ENCODE measurements at regions of chrX and their contacts with region 1.

Region 1: GRCh38 chrX:96551322-96551872 is 133.2 kb upstream of the DIAPH2 start:
- DNase-seq: no peak
- ATAC-seq: no peak
- H3K4me3 ChIP-seq: no peak overlapping the region
- H3K27ac ChIP-seq: no peak overlapping the region
- H3K4me1 ChIP-seq: no peaks in the 10 kb centered on the region
- H3K27me3 ChIP-seq: no peaks in the 10 kb centered on the region
- CTCF ChIP-seq: no peak

Region 2: GRCh38 chrX:96563663-96564062 is 12.3 kb after region 1 on chrX:
- CTCF ChIA-PET with region 1: no interaction called
- POLR2A ChIA-PET with region 1: interaction called, 10 read pairs
- in situ Hi-C with region 1: no loop called
- intact Hi-C with region 1: no loop called
- DNase-seq: no peak
- ATAC-seq: no peak
- H3K4me3 ChIP-seq: no peak overlapping the region
- H3K27ac ChIP-seq: no peak overlapping the region
- H3K4me1 ChIP-seq: no peaks in the 10 kb centered on the region
- H3K27me3 ChIP-seq: no peaks in the 10 kb centered on the region
- CTCF ChIP-seq: no peak

Region 3: GRCh38 chrX:96611619-96612362 is 60.4 kb after region 1 on chrX:
- CTCF ChIA-PET with region 1: no interaction called
- POLR2A ChIA-PET with region 1: interaction called, 11 read pairs
- in situ Hi-C with region 1: no loop called
- intact Hi-C with region 1: no loop called
- DNase-seq: no peak
- ATAC-seq: no peak
- H3K4me3 ChIP-seq: no peak overlapping the region
- H3K27ac ChIP-seq: no peak overlapping the region
- H3K4me1 ChIP-seq: no peaks in the 10 kb centered on the region
- H3K27me3 ChIP-seq: no peaks in the 10 kb centered on the region; the same call in 1 of the 2 replicates
- CTCF ChIP-seq: no peak

Region 4: DNA sequence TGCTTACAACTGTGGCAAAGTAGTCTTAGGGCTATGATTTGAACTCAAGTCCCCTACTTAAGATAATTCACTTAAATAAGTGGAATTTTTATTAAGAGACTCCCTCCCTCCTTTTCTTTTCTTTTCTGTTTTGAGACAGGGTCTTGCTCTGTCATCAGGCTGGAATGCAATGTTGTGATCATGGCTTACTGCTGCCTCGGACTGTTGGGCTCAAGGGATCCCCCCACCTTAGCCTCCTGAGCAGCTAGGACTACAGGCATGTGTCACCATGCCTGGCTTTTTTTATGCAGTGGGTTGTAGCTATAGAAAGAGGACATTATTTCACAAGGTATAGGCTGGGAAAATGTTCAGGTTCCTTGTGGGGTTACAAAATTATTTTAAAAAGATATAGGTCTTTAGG is 152.4 kb after region 1 on chrX:
- CTCF ChIA-PET with region 1: no interaction called
- POLR2A ChIA-PET with region 1: no interaction called
- in situ Hi-C with region 1: no loop called
- intact Hi-C with region 1: no loop called
- DNase-seq: no peak
- ATAC-seq: no peak
- H3K4me3 ChIP-seq: no peak overlapping the region
- H3K27ac ChIP-seq: no peak overlapping the region
- H3K4me1 ChIP-seq: no peaks in the 10 kb centered on the region
- H3K27me3 ChIP-seq: no peaks in the 10 kb centered on the region
- CTCF ChIP-seq: no peak

Region 5: DNA sequence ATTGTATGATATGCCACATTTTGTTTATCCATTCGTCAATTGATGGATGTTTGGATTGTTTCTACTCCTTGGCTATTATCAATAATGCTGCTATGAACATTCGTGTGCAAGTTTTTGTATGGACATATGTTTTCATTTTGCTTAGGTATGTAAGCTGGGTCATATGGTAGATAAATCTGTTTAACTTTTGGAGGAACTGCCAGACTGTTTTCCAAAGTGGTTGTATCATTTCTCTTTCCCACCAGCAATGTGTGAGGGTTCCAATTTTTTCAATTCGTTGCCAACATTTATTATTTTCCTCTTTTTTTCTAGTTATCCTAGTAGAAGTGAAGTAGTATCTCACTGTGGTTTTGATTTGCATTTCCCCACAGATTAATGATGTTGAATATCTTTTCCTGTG is 205.1 kb after region 1 on chrX:
- CTCF ChIA-PET with region 1: no interaction called
- POLR2A ChIA-PET with region 1: no interaction called
- in situ Hi-C with region 1: no loop called
- intact Hi-C with region 1: no loop called
- DNase-seq: no peak
- ATAC-seq: no peak
- H3K4me3 ChIP-seq: no peak overlapping the region
- H3K27ac ChIP-seq: no peak overlapping the region
- H3K4me1 ChIP-seq: no peaks in the 10 kb centered on the region
- H3K27me3 ChIP-seq: no peaks in the 10 kb centered on the region
- CTCF ChIP-seq: no peak